Activated B cell treated with CpG ODN at 0.5 μM for 24 hours (primary cell): ENCODE measurements at regions of chr12 and their contacts with region 1.

Region 1: GRCh38 chr12:68865399-68866164 is 57.6 kb downstream of the MDM2 start:
- DNase-seq: no peak
- ATAC-seq: no peak
- H3K4me3 Mint-ChIP-seq: no peak overlapping the region
- H3K27ac Mint-ChIP-seq: no peak overlapping the region
- H3K4me1 Mint-ChIP-seq: peaks cover 18% of the 10 kb centered on the region
- H3K27me3 Mint-ChIP-seq: no peaks in the 10 kb centered on the region
- CTCF ChIP-seq: no peak

Region 2: GRCh38 chr12:68831272-68831671 is 34.3 kb before region 1 on chr12:
- CTCF ChIA-PET with region 1: no interaction called
- POLR2A ChIA-PET with region 1: no interaction called
- intact Hi-C with region 1: loop called (anchors 2 kb)
- DNase-seq: no peak
- ATAC-seq: no peak
- H3K4me3 Mint-ChIP-seq: no peak overlapping the region
- H3K27ac Mint-ChIP-seq: no peak overlapping the region
- H3K4me1 Mint-ChIP-seq: peaks cover 5% of the 10 kb centered on the region
- H3K27me3 Mint-ChIP-seq: no peaks in the 10 kb centered on the region
- CTCF ChIP-seq: no peak

Region 3: DNA sequence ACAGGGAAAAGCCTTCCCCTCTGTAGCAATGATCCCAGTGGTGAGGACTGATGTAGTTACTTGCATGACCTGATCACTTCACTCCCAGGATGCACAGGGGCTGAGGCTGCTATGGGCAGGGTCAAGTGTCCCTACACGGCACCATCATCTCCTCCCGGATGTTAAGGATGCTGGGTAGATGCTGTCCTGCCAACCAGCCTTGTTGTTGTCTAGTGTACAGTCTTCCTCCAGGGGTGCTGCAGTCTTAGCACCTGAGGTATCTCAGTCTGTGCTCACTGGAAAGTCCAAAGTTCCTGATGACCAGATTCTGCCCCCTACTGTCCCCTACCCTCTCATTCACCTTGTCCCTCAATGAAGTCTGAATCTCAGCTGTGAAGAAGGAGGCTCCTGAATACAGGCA is 47.3 kb after region 1 on chr12:
- CTCF ChIA-PET with region 1: interaction called, 3 read pairs
- POLR2A ChIA-PET with region 1: no interaction called
- intact Hi-C with region 1: loop called (anchors 1 kb)
- DNase-seq: no peak
- ATAC-seq: no peak
- H3K4me3 Mint-ChIP-seq: no peak overlapping the region
- H3K27ac Mint-ChIP-seq: no peak overlapping the region
- H3K4me1 Mint-ChIP-seq: no peaks in the 10 kb centered on the region
- H3K27me3 Mint-ChIP-seq: no peaks in the 10 kb centered on the region
- CTCF ChIP-seq: no peak

Region 4: GRCh38 chr12:69039894-69040293 is 174.3 kb after region 1 on chr12:
- CTCF ChIA-PET with region 1: no interaction called
- POLR2A ChIA-PET with region 1: no interaction called
- intact Hi-C with region 1: no loop called
- DNase-seq: no peak
- ATAC-seq: no peak
- H3K4me3 Mint-ChIP-seq: no peak overlapping the region
- H3K27ac Mint-ChIP-seq: no peak overlapping the region
- H3K4me1 Mint-ChIP-seq: no peaks in the 10 kb centered on the region
- H3K27me3 Mint-ChIP-seq: peaks cover 3% of the 10 kb centered on the region
- CTCF ChIP-seq: no peak